ENCODE measurements at regions of chr3 and their contacts with region 1.

Region 1: DNA sequence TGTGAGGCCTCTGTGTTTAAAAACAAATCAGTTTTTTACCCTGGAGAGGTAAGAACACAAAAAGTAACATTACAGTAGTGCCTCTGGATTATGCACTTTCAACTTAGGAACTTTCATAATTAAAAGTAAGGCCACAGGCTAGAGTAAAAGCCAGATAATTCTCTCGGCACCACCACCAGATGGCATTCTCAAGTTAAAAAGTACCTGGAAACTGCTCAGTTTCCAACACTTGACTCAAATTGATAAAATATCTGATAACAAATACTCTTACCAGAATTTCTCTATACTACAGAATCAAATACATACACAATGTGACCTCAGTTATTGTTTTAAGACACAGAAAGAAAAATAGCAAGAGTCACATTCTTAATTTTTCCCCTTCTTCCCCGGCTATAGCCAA is 19.9 kb downstream of the SPICE1 start:
- DNase-seq: peak; percentile 40
- H3K4me3 Mint-ChIP-seq: no peak overlapping the region
- H3K27ac Mint-ChIP-seq: no peak overlapping the region
- H3K4me1 Mint-ChIP-seq: peaks cover 3% of the 10 kb centered on the region
- H3K27me3 Mint-ChIP-seq: no peaks in the 10 kb centered on the region

Region 2: GRCh38 chr3:113531826-113532697 is 37.0 kb after region 1 on chr3 and contains the start of gene SIDT1:
- CTCF ChIA-PET with region 1: interaction called, 6 read pairs
- POLR2A ChIA-PET with region 1: no interaction called
- intact Hi-C with region 1: loop called (anchors 2 kb)
- DNase-seq: peak; percentile 79
- H3K4me3 Mint-ChIP-seq: peak within 1 kb of the TSS; percentile 98
- H3K27ac Mint-ChIP-seq: peak within 1 kb of the TSS; percentile 96
- H3K4me1 Mint-ChIP-seq: peaks cover 45% of the 10 kb centered on the region
- H3K27me3 Mint-ChIP-seq: peaks cover 1% of the 10 kb centered on the region
- total RNA-seq, gene SIDT1: 11.3 TPM

Region 3: GRCh38 chr3:113552851-113553250 is 57.8 kb after region 1 on chr3:
- CTCF ChIA-PET with region 1: interaction called, 12 read pairs
- POLR2A ChIA-PET with region 1: no interaction called
- intact Hi-C with region 1: loop called (anchors 1 kb)
- DNase-seq: peak; percentile 26
- H3K4me3 Mint-ChIP-seq: no peak overlapping the region
- H3K27ac Mint-ChIP-seq: no peak overlapping the region
- H3K4me1 Mint-ChIP-seq: peaks cover 19% of the 10 kb centered on the region
- H3K27me3 Mint-ChIP-seq: no peaks in the 10 kb centered on the region